B cell (primary cell): ENCODE measurements at regions of chr22 and their contacts with region 1.

Region 1: DNA sequence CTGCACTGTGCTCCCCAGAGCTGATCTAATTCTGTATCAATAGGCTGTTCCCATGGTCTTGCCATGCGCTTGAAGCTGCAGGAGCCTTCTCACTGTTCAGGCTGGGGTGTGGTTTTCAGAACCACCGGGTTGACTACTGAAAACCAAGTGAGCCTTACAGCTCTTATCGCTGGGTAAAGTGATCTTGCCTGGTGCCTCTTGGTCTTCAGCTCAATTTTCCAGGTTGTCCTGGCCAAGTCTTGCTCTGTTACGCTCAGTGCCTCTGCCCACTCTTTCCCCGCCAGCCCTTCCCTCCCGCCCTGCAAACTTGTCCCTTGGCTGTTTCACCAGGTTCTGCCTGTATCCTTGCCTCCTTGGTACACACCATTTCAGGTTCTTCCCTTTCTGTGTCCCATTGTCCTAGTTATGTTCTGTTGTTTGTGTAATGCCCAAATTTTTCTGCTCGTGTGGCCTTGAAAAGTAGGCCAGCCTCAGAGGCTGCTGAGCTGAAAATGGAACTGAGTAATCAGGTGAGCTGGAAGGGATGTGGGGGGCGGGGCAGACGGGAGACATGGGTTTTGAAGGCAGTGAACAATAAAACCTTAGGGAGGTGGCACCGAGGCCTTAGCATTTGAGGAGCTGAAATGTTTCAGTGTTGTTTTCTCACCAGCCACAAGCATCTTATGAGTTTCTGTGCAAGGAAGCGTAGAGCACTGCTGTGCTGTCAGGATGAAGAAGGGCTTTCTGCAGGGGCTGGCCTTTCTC is 11.2 kb downstream of the PEX26 start:
- DNase-seq: no peak
- ATAC-seq: no peak
- H3K4me3 ChIP-seq: no peak overlapping the region
- H3K4me3 Mint-ChIP-seq: no peak overlapping the region
- H3K27ac ChIP-seq: no peak overlapping the region
- H3K27ac Mint-ChIP-seq: no peak overlapping the region
- H3K4me1 ChIP-seq: no peaks in the 10 kb centered on the region
- H3K4me1 Mint-ChIP-seq: peaks cover 9% of the 10 kb centered on the region
- H3K27me3 ChIP-seq: no peaks in the 10 kb centered on the region
- H3K27me3 Mint-ChIP-seq: no peaks in the 10 kb centered on the region
- CTCF ChIP-seq: no peak

Region 2: GRCh38 chr22:17867160-17867785 is 221.7 kb before region 1 on chr22:
- CTCF ChIA-PET with region 1: no interaction called
- POLR2A ChIA-PET with region 1: no interaction called
- intact Hi-C with region 1: no loop called
- DNase-seq: no peak
- ATAC-seq: no peak
- H3K4me3 ChIP-seq: no peak overlapping the region
- H3K4me3 Mint-ChIP-seq: no peak overlapping the region
- H3K27ac ChIP-seq: no peak overlapping the region
- H3K27ac Mint-ChIP-seq: peak overlapping the region; percentile 60
- H3K4me1 ChIP-seq: no peaks in the 10 kb centered on the region
- H3K4me1 Mint-ChIP-seq: no peaks in the 10 kb centered on the region
- H3K27me3 ChIP-seq: no peaks in the 10 kb centered on the region
- H3K27me3 Mint-ChIP-seq: no peaks in the 10 kb centered on the region
- CTCF ChIP-seq: no peak

Region 3: DNA sequence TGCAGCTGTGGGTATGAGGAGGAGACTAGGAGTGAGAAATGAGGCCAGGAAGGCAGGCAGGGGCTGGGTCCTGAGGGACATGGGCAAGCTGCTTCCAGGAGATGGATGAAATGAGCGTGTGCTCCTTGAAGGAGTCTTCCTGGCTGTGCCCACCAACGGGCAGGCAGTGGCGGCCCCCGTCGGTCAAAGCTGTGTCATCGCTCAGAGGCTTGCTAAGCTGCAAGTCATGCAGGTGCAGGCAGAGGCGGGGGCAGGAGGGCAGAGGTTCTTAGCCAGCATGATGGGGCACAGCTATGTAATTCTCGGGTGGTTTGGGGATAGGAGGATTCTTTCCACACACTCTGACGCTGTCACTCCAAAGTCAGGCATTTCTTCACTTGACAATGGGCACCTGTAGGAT is 23.7 kb before region 1 on chr22:
- CTCF ChIA-PET with region 1: no interaction called
- POLR2A ChIA-PET with region 1: no interaction called
- intact Hi-C with region 1: loop called (anchors 1 kb)
- DNase-seq: no peak
- ATAC-seq: peak; percentile 32
- H3K4me3 ChIP-seq: no peak overlapping the region
- H3K4me3 Mint-ChIP-seq: peak overlapping the region; percentile 79
- H3K27ac ChIP-seq: no peak overlapping the region
- H3K27ac Mint-ChIP-seq: peak overlapping the region; percentile 87
- H3K4me1 ChIP-seq: peaks cover 44 to 55% of the 10 kb centered on the region in 2 donors
- H3K4me1 Mint-ChIP-seq: peaks cover 61% of the 10 kb centered on the region
- H3K27me3 ChIP-seq: no peaks in the 10 kb centered on the region
- H3K27me3 Mint-ChIP-seq: no peaks in the 10 kb centered on the region
- CTCF ChIP-seq: no peak